AG04450 (cell line): ENCODE measurements at regions of chr9 and their contacts with region 1.

Region 1: GRCh38 chr9:18208154-18209059 is 265.5 kb upstream of the ADAMTSL1 start:
- DNase-seq: no peak
- H3K4me3 ChIP-seq: no peak overlapping the region
- H3K27ac ChIP-seq: no peak overlapping the region
- H3K27me3 ChIP-seq: no peaks in the 10 kb centered on the region
- CTCF ChIP-seq: peak; percentile 48

Region 2: DNA sequence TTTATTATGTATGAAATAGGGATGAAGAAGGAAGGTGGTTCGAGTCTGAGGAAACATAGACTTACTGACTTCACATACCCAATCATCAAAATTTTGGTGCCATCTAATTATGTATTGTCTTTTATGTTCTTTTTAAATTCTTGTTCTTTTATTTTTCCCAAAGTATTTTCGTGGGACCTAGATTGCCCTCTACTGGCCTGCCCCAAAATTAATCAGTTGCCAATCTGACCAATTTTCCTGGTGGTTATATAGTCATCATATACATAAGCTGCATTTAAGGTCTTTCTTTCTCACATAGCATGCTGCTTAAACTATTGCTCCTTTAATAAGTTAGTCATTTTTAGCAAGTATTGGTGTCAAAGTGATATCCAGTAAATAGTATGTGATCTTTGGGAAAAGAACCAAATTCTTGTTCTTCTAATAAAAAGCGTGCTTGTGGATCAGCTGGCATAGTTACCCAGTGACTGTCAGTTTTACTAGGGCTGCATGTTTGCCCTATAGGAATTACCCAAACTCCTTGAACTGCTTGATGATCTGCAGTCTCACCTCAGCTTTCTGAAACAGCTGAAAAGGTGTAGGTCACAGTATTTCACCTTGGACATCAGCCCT is 406.1 kb before region 1 on chr9:
- CTCF ChIA-PET with region 1: interaction called, 11 read pairs
- POLR2A ChIA-PET with region 1: no interaction called
- DNase-seq: no peak
- H3K4me3 ChIP-seq: no peak overlapping the region
- H3K27ac ChIP-seq: no peak overlapping the region
- H3K27me3 ChIP-seq: no peaks in the 10 kb centered on the region
- CTCF ChIP-seq: peak; percentile 71

Region 3: GRCh38 chr9:17928228-17928627 is 280.2 kb before region 1 on chr9:
- CTCF ChIA-PET with region 1: no interaction called
- POLR2A ChIA-PET with region 1: no interaction called
- DNase-seq: no peak
- H3K4me3 ChIP-seq: no peak overlapping the region
- H3K27ac ChIP-seq: no peak overlapping the region
- H3K27me3 ChIP-seq: no peaks in the 10 kb centered on the region
- CTCF ChIP-seq: no peak

Region 4: DNA sequence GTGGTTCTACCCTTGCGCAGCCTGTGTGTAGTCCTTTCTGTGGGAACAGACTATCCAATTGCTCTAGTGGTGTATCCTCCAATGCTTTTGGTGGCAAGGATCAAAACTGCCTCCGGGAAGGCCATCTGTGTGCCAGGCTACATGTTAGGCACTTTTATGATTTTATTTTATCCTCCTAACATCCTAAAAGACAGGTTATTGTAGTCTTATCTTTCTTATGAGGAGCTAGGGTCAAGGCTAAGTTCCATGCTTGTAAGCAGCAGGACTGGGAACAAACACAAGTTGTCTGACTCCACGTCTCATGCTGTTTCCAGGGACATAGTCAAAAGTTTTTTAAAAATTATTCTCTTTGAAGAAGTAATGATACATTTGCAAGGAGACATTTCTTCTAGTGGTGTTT is 13.2 kb before region 1 on chr9:
- CTCF ChIA-PET with region 1: interaction called, 12 read pairs
- POLR2A ChIA-PET with region 1: no interaction called
- DNase-seq: no peak
- H3K4me3 ChIP-seq: no peak overlapping the region
- H3K27ac ChIP-seq: no peak overlapping the region
- H3K27me3 ChIP-seq: no peaks in the 10 kb centered on the region
- CTCF ChIP-seq: no peak

Region 5: DNA sequence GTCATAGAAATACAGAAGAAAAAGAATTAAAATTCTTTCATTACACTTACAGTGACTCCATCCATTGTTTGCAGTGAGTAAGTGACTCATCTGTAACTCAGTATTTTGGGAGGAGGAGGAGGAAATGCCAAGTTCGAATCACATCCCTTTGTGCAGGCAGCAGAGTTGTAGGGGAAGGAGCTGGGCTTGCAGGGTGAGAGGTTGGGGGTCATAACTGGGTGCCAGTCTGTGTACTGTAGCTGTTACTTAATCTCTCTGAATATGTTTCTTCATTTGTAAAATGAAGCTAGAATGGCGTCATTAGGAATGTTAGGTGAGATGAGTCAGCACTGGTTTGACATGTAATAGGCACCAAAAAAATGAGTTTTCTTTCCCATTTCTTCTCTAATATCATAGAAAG is 29.8 kb after region 1 on chr9:
- CTCF ChIA-PET with region 1: interaction called, 20 read pairs
- POLR2A ChIA-PET with region 1: no interaction called
- DNase-seq: peak; percentile 8
- H3K4me3 ChIP-seq: peak overlapping the region; percentile 8; the same call in 1 of the 2 replicates
- H3K27ac ChIP-seq: peak overlapping the region; percentile 32
- H3K27me3 ChIP-seq: no peaks in the 10 kb centered on the region
- CTCF ChIP-seq: no peak